ENCODE measurements at regions of chr10 and their contacts with region 1.

Region 1: GRCh38 chr10:74234569-74234968 is 83.5 kb downstream of the ADK start:
- DNase-seq: peak; percentile 81
- ATAC-seq: peak; percentile 25; the same call in 1 of the 2 replicates
- H3K4me3 ChIP-seq: no peak overlapping the region
- H3K27ac ChIP-seq: no peak overlapping the region
- H3K4me1 ChIP-seq: peaks cover 14% of the 10 kb centered on the region
- H3K27me3 ChIP-seq: no peaks in the 10 kb centered on the region
- CTCF ChIP-seq: peak; percentile 99

Region 2: GRCh38 chr10:73848821-73849489 is 385.6 kb before region 1 on chr10:
- CTCF ChIA-PET with region 1: no interaction called
- POLR2A ChIA-PET with region 1: no interaction called
- intact Hi-C with region 1: loop called (anchors 5 kb)
- DNase-seq: peak; percentile 100
- ATAC-seq: peak; percentile 96
- H3K4me3 ChIP-seq: no peak overlapping the region
- H3K27ac ChIP-seq: no peak overlapping the region
- H3K4me1 ChIP-seq: no peaks in the 10 kb centered on the region
- H3K27me3 ChIP-seq: no peaks in the 10 kb centered on the region
- CTCF ChIP-seq: peak; percentile 100

Region 3: GRCh38 chr10:74058658-74059057 is 175.9 kb before region 1 on chr10:
- CTCF ChIA-PET with region 1: no interaction called
- POLR2A ChIA-PET with region 1: interaction called, 11 read pairs
- intact Hi-C with region 1: no loop called
- DNase-seq: peak; percentile 77
- ATAC-seq: no peak
- H3K4me3 ChIP-seq: no peak overlapping the region; the same call in 1 of the 2 replicates
- H3K27ac ChIP-seq: peak overlapping the region; percentile 71
- H3K4me1 ChIP-seq: peaks cover 55% of the 10 kb centered on the region
- H3K27me3 ChIP-seq: no peaks in the 10 kb centered on the region
- CTCF ChIP-seq: peak; percentile 75

Region 4: DNA sequence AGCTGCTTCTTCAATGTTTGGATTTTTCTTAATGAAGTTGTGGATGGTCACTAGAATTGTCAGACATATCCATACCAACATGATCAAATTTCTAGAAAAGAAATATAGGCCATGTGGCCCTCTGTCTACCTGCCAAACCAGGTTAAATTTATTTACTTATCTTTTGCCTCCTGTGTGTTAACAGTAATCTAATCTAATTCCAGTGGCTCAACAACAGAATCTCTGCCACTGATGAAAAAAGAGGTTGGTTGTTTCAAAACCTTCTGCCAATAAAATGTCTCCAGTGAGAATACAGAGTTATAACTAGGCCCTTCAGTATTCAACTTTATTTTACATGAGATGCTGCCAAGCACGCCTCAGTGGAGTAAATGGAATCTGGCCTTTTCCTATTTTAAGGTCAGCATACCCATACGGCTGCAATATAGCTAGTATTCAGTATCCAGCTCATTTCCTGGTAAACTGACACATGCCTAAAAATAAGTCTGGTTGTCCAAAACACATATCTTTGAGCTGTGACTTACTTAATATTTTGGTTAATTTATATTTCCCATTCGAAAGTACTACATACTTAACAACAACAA is 100.2 kb before region 1 on chr10:
- CTCF ChIA-PET with region 1: interaction called, 12 read pairs
- POLR2A ChIA-PET with region 1: no interaction called
- intact Hi-C with region 1: no loop called
- DNase-seq: no peak
- ATAC-seq: no peak
- H3K4me3 ChIP-seq: no peak overlapping the region
- H3K27ac ChIP-seq: no peak overlapping the region
- H3K4me1 ChIP-seq: no peaks in the 10 kb centered on the region
- H3K27me3 ChIP-seq: no peaks in the 10 kb centered on the region
- CTCF ChIP-seq: no peak

Region 5: GRCh38 chr10:74176380-74177139 is 58.0 kb before region 1 on chr10:
- CTCF ChIA-PET with region 1: interaction called, 6 read pairs
- POLR2A ChIA-PET with region 1: no interaction called
- intact Hi-C with region 1: loop called (anchors 1 kb)
- DNase-seq: peak; percentile 100
- ATAC-seq: peak; percentile 94
- H3K4me3 ChIP-seq: peak overlapping the region; percentile 69
- H3K27ac ChIP-seq: peak overlapping the region; percentile 76
- H3K4me1 ChIP-seq: peaks cover 40% of the 10 kb centered on the region
- H3K27me3 ChIP-seq: no peaks in the 10 kb centered on the region
- CTCF ChIP-seq: 0 out of 2 replicates have a peak, but pooled peaks have one; percentile 6